ENCODE measurements at regions of chr1 and their contacts with region 1.

Region 1: DNA sequence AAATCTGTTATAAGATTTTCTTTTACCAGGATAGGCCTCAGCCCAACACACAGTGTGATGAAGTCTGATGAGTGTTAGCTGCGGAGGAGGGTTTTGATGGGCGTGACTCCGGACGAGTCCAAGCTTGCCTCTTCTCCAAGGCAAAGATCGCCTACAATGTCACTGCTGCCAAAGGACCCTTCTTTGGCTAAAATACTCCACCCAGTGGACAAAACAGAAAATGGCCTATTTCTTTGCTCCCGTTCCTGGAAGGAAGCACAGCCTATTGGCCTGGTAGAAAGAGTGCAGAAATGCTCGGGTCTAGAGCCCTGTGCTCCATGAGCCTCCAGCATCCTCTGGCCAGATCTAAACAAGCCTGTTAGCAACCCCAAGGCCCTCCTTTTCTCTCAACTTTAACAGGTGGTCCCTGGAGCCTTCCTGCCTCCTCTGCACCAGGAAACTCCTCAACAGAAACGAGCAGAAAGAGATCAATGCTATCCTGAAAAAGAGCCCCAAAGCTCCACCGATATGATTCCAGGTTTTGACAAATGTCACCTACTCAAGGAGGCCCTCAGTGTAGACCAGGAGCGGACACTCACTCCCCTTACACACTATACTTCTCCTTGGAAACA is 3.4 kb upstream of the CASQ2 start:
- DNase-seq: peak in 4 of 10 donors; percentile 25 to 39 (median 34)

Region 2: GRCh38 chr1:115609021-115609420 is 162.9 kb before region 1 on chr1:
- intact Hi-C with region 1: loop called (anchors 5 kb)
- DNase-seq: no peak

Region 3: DNA sequence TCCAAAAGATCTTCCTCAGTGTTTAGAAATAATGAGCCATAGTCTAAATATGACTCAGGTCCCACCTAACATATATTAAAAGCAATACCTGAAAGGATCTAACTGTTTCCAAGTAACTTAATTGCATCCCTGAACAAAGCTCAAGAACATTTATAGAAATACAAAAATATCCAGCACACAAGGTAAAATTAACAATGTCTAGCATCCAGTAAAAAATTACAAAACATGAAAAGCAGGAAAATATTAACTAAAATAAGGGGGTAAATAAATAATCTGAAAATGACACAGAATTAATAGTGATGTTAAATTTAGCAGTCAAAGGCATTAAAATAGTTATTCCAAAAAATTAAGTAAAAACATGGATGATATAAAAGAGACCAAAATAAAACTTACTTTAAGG is 151.5 kb before region 1 on chr1:
- intact Hi-C with region 1: no loop called
- DNase-seq: no peak

Region 4: DNA sequence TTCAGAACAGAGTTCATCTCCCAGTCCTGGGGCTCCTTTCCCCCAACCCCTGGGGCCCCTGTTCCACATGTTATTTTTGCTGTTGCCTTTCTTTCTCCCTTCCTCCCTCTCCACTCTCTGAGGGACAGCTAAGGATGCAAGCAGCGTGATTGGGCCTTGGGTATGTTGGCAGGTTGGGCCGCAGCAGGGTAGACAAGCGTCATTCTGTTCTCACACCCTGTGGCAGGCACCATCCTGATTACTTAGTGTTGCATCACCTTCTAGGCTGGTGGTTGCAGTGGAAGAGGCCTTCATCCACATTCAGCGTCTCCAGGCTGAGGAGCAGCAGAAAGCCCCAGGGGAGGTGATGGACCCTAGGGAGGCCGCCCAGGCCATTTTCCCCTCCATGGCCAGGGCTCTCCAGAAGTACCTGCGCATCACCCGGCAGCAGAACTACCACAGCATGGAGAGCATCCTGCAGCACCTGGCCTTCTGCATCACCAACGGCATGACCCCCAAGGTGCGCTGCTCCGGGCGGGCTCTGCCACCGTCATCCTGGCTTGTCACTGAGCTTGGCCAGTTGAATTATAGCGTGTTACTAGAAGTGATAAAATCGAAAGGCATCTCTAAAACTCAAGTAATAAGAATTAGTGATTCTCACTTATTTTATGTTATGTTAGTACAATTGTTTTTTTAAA is 86.8 kb before region 1 on chr1:
- intact Hi-C with region 1: no loop called
- DNase-seq: no peak

Region 5: DNA sequence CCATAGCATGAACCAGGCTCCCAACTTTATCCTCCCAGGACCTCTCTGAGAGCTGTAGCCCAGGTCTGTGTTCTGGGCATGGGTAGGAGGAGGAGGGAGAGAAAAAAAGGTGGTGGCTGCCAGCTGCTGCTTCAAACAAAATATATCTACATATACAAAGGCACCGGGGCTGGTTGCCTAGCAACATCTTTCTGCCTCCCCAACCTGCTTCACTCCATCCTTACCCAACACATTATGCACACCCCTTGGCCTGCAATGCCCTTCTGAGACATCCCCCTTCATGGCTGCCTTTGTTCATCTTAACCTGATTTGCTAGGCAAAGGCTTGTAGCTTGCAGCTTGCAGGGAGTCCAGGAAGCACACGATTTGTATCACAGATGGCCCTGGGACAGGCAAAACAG is 573.9 kb after region 1 on chr1:
- intact Hi-C with region 1: no loop called
- DNase-seq: peak in 3 of 10 donors; percentile 37 to 87 (median 44)